ENCODE measurements at regions of chr5 and their contacts with region 1.

Region 1: GRCh38 chr5:83987513-83988292 is 267.0 kb upstream of the HAPLN1 start:
- DNase-seq: no peak
- H3K4me3 ChIP-seq: no peak overlapping the region
- H3K27ac ChIP-seq: no peak overlapping the region
- H3K4me1 ChIP-seq: no peaks in the 10 kb centered on the region
- CTCF ChIP-seq: no peak

Region 2: DNA sequence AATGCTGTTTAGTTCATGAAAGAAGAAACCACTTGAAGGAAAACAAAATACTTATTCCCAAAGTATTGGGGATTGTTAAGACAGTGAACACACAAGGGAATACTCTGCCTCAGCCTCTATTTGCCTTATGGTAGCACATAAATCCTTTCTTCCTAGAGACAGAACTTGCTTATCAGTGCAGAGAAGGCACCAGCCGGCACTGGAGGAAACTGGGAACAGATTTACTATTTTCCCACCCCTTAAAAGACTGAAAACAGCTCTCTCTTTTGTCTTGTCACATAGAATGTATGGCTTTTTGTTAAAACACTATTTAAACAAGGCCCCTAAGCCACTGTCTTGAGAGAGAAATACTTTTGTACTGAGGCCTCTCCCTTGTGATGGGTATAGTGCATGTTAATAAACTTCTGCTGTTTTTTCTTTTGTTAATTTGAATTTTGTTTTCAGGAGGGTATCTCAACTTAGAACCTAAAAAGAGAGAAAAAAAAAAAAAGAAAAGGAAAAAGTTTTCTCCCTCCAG is 437.7 kb after region 1 on chr5:
- CTCF ChIA-PET with region 1: no interaction called
- POLR2A ChIA-PET with region 1: no interaction called
- intact Hi-C with region 1: loop called (anchors 10 kb)
- DNase-seq: no peak
- H3K4me3 ChIP-seq: no peak overlapping the region
- H3K27ac ChIP-seq: no peak overlapping the region
- H3K4me1 ChIP-seq: no peaks in the 10 kb centered on the region
- CTCF ChIP-seq: no peak